IMR-90 (cell line): ENCODE measurements at regions of chr13 and their contacts with region 1.

Region 1: GRCh38 chr13:27362064-27362883 is 62.1 kb upstream of the GTF3A start:
- DNase-seq: peak; percentile 71
- ATAC-seq: peak; percentile 97
- H3K4me3 ChIP-seq: peak overlapping the region; percentile 61
- H3K27ac ChIP-seq: peak overlapping the region; percentile 38; the same call in 1 of the 2 replicates
- H3K4me1 ChIP-seq: peaks cover 4% of the 10 kb centered on the region; the same call in 1 of the 2 replicates
- H3K27me3 ChIP-seq: peaks cover 12% of the 10 kb centered on the region
- CTCF ChIP-seq: peak; percentile 95
- POLR2A ChIP-seq: no peak
- RAD21 ChIP-seq: peak; percentile 95

Region 2: DNA sequence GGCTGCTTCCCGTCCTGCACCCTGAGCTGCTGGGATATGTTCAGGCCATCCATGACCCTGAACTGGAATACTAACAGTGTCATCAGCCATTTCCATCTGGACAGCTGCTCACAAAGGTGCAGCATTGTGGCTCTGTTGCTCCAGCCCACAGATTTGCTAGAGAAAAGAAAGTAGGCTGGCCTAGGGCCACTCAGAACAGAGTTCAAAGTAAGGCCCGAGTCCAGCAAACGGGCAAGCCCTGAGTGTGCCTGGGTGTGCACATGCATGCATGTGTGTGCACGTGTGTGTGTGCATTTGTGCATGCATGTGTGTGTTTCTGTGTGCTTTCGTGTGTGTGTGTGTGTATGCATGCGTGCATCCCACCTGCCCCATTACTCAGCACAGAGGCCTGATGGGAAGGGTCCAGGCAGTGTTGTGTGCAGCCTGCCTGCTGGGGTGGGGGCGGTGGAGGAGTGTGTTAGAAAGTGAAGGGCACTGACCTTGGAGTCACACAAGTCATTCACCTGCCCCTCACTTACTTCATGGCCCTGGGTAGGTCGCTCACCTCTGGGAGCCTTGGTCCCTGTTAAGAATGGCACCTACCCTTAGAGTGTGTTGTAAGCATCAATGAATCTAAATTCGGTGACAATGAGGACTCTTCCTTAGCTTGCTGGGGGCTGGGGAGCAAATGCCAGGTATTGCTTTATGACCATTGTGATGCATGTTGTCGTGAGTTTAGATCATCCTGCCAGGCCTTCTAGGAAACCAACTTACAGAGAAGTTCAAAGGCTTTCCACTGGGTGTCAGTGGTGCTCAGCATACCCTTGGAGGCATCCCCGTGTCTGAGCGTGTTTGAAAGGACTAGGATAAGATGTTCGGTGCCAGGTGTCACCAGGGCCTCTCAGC is 654.9 kb before region 1 on chr13:
- CTCF ChIA-PET with region 1: no interaction called
- POLR2A ChIA-PET with region 1: no interaction called
- dilution Hi-C with region 1: no loop called
- in situ Hi-C with region 1: no loop called
- intact Hi-C with region 1: loop called (anchors 5 kb)
- DNase-seq: peak; percentile 58
- ATAC-seq: peak; percentile 99
- H3K4me3 ChIP-seq: no peak overlapping the region
- H3K27ac ChIP-seq: no peak overlapping the region
- H3K4me1 ChIP-seq: no peaks in the 10 kb centered on the region
- H3K27me3 ChIP-seq: peaks cover 16% of the 10 kb centered on the region
- CTCF ChIP-seq: peak; percentile 64
- POLR2A ChIP-seq: no peak
- RAD21 ChIP-seq: peak; percentile 68

Region 3: GRCh38 chr13:27079421-27079958 is 282.8 kb before region 1 on chr13:
- CTCF ChIA-PET with region 1: no interaction called
- POLR2A ChIA-PET with region 1: no interaction called
- dilution Hi-C with region 1: no loop called
- in situ Hi-C with region 1: no loop called
- intact Hi-C with region 1: loop called (anchors 10 kb)
- DNase-seq: peak; percentile 67
- ATAC-seq: peak; percentile 87
- H3K4me3 ChIP-seq: no peak overlapping the region
- H3K27ac ChIP-seq: no peak overlapping the region; the same call in 1 of the 2 replicates
- H3K4me1 ChIP-seq: peaks cover 11% of the 10 kb centered on the region
- H3K27me3 ChIP-seq: no peaks in the 10 kb centered on the region
- CTCF ChIP-seq: no peak
- POLR2A ChIP-seq: no peak
- RAD21 ChIP-seq: no peak

Region 4: DNA sequence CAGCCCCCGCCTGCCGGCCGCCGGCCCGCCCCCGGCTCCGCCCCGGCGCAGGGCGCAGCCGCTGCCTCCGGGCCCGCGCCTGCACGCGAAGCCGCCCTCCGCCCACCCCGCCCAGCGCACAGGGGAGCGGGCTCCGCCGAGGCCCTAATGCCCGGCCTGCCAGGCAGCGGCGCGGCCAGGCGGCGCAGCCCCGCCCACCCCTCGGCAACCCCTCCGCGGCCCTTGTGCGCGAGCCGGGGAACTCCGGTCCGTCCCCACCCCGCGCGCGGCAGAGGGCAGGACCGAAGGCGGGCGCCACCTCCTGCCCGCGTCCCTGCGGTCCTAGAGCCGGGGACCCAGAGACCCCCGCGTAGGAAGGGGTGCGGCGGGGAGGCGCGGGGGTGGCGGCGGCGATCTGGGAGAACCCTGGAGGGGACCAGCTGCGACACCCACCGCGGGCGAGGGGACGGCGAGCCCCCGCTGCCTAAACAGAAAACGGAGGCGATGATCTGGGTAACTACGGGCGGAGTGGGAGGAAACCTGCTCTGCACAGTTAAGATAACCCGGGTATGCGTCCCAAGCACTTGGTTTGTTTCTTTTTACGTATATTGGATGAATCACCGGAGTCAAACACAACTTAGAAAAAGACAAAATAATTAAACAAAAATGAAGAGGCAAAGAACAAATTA is 190.3 kb before region 1 on chr13:
- CTCF ChIA-PET with region 1: interaction called, 4 read pairs
- POLR2A ChIA-PET with region 1: no interaction called
- dilution Hi-C with region 1: no loop called
- in situ Hi-C with region 1: no loop called
- intact Hi-C with region 1: loop called (anchors 2 kb)
- DNase-seq: peak; percentile 90
- ATAC-seq: peak; percentile 93
- H3K4me3 ChIP-seq: peak overlapping the region; percentile 64
- H3K27ac ChIP-seq: peak overlapping the region; percentile 95
- H3K4me1 ChIP-seq: peaks cover 12% of the 10 kb centered on the region
- H3K27me3 ChIP-seq: no peaks in the 10 kb centered on the region
- CTCF ChIP-seq: 0 out of 2 replicates have a peak, but pooled peaks have one; percentile 11
- POLR2A ChIP-seq: peak; percentile 61
- RAD21 ChIP-seq: 0 out of 2 replicates have a peak, but pooled peaks have one; percentile 6

Region 5: GRCh38 chr13:27374650-27375049 is 12.4 kb after region 1 on chr13:
- CTCF ChIA-PET with region 1: interaction called, 14 read pairs
- POLR2A ChIA-PET with region 1: no interaction called
- dilution Hi-C with region 1: no loop called
- in situ Hi-C with region 1: no loop called
- intact Hi-C with region 1: no loop called
- DNase-seq: peak; percentile 88
- ATAC-seq: peak; percentile 98
- H3K4me3 ChIP-seq: no peak overlapping the region
- H3K27ac ChIP-seq: no peak overlapping the region
- H3K4me1 ChIP-seq: no peaks in the 10 kb centered on the region
- H3K27me3 ChIP-seq: peaks cover 22% of the 10 kb centered on the region
- CTCF ChIP-seq: peak; percentile 89
- POLR2A ChIP-seq: no peak
- RAD21 ChIP-seq: peak; percentile 82